Motor neuron (in vitro differentiated cells): ENCODE measurements at regions of chr3 and their contacts with region 1.

Region 1: GRCh38 chr3:189947948-189948723 is 172.6 kb downstream of the P3H2 start:
- ATAC-seq: peak in 3 of 8 experiments; percentile 25 to 53 (median 49)
- H3K4me3 ChIP-seq: no peak overlapping the region
- H3K27ac ChIP-seq: no peak overlapping the region
- H3K4me1 ChIP-seq: no peaks in the 10 kb centered on the region

Region 2: GRCh38 chr3:189270248-189270832 is 677.8 kb before region 1 on chr3:
- in situ Hi-C with region 1: loop called in 4 of 9 experiments (anchors 10 to 25 kb)
- ATAC-seq: peak; percentile 44 to 96 (median 76)
- H3K4me3 ChIP-seq: no peak overlapping the region
- H3K27ac ChIP-seq: no peak overlapping the region
- H3K4me1 ChIP-seq: no peaks in the 10 kb centered on the region

Region 3: DNA sequence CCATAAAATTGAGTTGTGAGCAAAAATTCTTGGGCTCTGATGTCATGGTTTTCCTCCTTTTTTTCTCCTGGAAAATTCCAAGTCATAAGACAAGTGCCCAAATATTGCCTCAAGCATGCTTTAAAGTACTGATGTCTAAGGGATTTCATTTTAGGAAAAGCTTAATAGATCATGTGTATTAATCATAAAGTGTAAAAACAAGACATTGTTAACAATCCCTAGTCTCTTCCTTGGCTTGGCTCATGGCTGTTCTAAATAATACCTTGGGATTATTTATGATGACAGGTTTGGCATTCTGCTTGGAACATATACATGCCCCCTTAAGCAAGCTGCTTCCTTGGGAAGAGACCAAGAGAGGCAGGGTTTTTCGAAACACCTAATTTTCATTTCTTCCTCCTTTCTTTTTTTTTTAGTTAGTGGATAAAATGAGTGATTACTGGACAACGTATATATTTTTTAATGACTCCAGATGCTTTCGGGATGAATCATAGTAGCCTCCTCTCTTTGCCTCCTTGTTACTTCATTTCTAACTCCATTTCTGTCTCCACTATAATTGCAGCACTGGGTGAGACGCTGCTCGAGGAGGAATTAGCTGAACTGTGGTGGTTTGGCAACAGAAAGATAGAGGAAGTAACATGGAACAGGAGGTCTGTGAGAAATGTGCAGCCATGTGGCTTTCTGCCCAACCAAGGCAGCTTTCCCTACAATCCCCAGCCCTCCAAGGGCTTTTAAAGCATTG is 671.5 kb before region 1 on chr3:
- in situ Hi-C with region 1: loop called in 4 of 9 experiments (anchors 10 to 25 kb)
- ATAC-seq: peak in 1 of 8 experiments; percentile 52
- H3K4me3 ChIP-seq: no peak overlapping the region
- H3K27ac ChIP-seq: no peak overlapping the region
- H3K4me1 ChIP-seq: no peaks in the 10 kb centered on the region

Region 4: DNA sequence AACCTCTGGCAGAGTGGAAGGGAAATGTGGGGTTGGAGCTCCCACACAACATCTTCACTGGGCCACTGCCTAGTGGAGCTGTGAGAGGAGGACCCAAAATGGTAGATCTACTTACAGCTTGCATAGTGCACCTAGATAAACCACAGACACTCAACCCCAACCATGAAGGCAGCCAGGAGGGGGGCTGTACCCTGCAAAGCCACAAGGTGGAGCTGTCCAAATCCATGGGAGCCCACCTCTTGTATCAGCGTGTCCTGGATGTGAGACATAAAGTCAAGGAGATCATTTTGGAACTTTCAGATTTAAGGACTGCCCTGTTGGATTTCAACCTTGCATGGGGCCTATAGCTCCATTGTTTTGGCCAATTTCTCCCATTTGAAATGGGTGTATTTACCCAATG is 296.1 kb before region 1 on chr3:
- in situ Hi-C with region 1: loop called in 1 of 9 experiments (anchors 25 kb)
- ATAC-seq: peak in 1 of 8 experiments; percentile 50
- H3K4me3 ChIP-seq: no peak overlapping the region
- H3K27ac ChIP-seq: no peak overlapping the region
- H3K4me1 ChIP-seq: peaks cover 0 to 4% of the 10 kb centered on the region in 2 donors

Region 5: DNA sequence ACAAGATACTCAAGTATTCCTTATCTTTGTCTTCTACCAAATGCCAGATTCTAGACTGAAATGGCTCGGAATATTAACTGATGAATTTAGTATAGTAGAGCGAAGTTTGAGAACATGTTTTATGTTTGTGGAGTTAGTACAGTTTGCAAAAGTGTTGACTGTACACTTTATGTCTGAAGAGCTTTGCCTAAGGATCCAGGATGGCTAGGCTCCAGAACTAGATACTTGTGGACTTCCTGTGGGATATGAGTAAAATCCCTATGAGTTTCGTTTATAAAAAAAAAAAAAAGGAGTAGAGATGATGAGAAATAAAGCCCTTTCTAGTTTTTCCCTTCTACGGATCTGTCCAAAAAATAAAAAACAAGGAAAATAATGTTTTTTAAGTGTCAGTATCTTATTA is 220.2 kb before region 1 on chr3:
- in situ Hi-C with region 1: loop called in 1 of 9 experiments (anchors 25 kb)
- ATAC-seq: no peak
- H3K4me3 ChIP-seq: no peak overlapping the region
- H3K27ac ChIP-seq: no peak overlapping the region
- H3K4me1 ChIP-seq: no peaks in the 10 kb centered on the region